HEK293 (cell line): ENCODE measurements at regions of chr3 and their contacts with region 1.

Region 1: GRCh38 chr3:196524527-196524926 is 9.4 kb upstream of the SMCO1 start:
- H3K4me3 ChIP-seq: no peak overlapping the region
- H3K27ac ChIP-seq: no peak overlapping the region
- H3K4me1 ChIP-seq: no peaks in the 10 kb centered on the region
- CTCF ChIP-seq: peak; percentile 31; the same call in 1 of the 2 replicates

Region 2: GRCh38 chr3:196254376-196255283 is 269.9 kb before region 1 on chr3:
- CTCF ChIA-PET with region 1: interaction called, 18 read pairs
- POLR2A ChIA-PET with region 1: no interaction called
- H3K4me3 ChIP-seq: no peak overlapping the region
- H3K27ac ChIP-seq: no peak overlapping the region
- H3K4me1 ChIP-seq: no peaks in the 10 kb centered on the region
- CTCF ChIP-seq: no peak

Region 3: DNA sequence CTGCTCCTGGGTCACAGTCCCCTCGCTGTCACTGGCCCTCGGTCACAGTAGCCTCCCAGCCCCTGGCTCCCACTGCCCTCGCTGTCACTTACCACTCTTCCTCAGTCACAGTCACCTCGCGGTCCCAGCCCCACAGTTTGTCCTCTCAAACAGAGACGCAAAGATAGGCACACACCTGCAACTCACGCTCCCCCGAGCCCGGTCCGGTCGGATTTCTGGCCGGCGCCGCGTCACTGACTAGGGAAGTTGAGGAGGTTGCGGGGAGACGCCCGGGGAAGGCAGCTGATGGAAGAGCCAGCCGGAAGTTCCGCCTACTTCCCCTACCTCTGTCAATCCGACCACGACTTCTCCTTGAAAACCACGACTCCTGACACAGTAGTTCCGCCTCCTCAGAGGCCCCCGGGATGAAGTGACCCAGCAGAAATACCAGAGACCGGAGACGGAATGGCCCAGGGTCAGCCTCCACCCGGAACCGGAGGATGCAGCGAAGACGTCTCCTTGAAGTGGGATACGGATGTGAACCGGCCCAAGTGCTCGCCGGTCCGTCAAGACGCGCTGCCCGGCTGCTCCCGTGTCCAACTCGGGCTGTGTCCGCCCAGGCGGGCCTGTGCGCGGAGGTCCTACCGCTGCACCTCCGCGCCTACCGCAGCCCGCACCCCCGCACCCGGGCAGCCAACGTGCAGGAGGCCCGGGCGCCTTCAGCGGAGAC is 236.9 kb before region 1 on chr3 and contains the start of gene PCYT1A:
- CTCF ChIA-PET with region 1: no interaction called
- POLR2A ChIA-PET with region 1: no interaction called
- H3K4me3 ChIP-seq: peak within 1 kb of the TSS; percentile 93
- H3K27ac ChIP-seq: peak within 1 kb of the TSS; percentile 57; the same call in 1 of the 2 replicates
- H3K4me1 ChIP-seq: no peaks in the 10 kb centered on the region; the same call in 1 of the 2 replicates
- CTCF ChIP-seq: no peak